ENCODE measurements at regions of chr15 and their contacts with region 1.

Region 1: DNA sequence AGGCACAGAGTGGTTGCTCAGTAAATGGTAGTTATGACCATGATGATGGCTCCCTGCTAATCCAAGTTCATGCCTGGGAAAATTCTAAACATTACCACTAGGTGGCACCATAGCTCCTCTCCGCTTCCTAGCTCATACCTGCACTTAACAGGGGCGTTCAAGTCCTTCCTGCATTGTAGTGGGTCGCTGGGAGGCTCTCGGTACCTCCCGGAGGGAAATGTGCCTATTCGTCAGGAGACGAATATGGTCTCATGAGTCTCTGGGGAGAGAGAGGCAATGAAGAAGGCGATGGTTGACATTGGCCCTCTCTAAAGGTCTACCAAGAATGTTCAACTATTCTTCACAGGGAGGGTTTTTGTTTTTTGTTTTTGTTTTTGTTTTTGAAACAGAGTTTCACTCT is 10.9 kb downstream of the MESP1 start:
- DNase-seq: peak; percentile 79
- ATAC-seq: peak; percentile 90
- H3K4me3 Mint-ChIP-seq: no peak overlapping the region
- H3K27ac Mint-ChIP-seq: no peak overlapping the region
- H3K4me1 Mint-ChIP-seq: peaks cover 2% of the 10 kb centered on the region
- H3K27me3 Mint-ChIP-seq: peaks cover 4% of the 10 kb centered on the region

Region 2: GRCh38 chr15:89640245-89640644 is 99.9 kb before region 1 on chr15:
- CTCF ChIA-PET with region 1: no interaction called
- POLR2A ChIA-PET with region 1: no interaction called
- DNase-seq: no peak
- ATAC-seq: no peak
- H3K4me3 Mint-ChIP-seq: no peak overlapping the region
- H3K27ac Mint-ChIP-seq: no peak overlapping the region
- H3K4me1 Mint-ChIP-seq: peaks cover 2% of the 10 kb centered on the region
- H3K27me3 Mint-ChIP-seq: no peaks in the 10 kb centered on the region

Region 3: GRCh38 chr15:89728254-89728653 is 11.9 kb before region 1 on chr15:
- CTCF ChIA-PET with region 1: interaction called, 14 read pairs
- POLR2A ChIA-PET with region 1: no interaction called
- DNase-seq: no peak
- ATAC-seq: no peak
- H3K4me3 Mint-ChIP-seq: no peak overlapping the region
- H3K27ac Mint-ChIP-seq: no peak overlapping the region
- H3K4me1 Mint-ChIP-seq: no peaks in the 10 kb centered on the region
- H3K27me3 Mint-ChIP-seq: peaks cover 6% of the 10 kb centered on the region

Region 4: GRCh38 chr15:89750560-89751542 is 10.7 kb after region 1 on chr15 and contains the start of gene MESP1:
- CTCF ChIA-PET with region 1: interaction called, 23 read pairs
- POLR2A ChIA-PET with region 1: no interaction called
- DNase-seq: peak; percentile 90
- ATAC-seq: peak; percentile 96
- H3K4me3 Mint-ChIP-seq: peak within 1 kb of the TSS; percentile 69
- H3K27ac Mint-ChIP-seq: peak within 1 kb of the TSS; percentile 64
- H3K4me1 Mint-ChIP-seq: no peaks in the 10 kb centered on the region
- H3K27me3 Mint-ChIP-seq: peaks cover 24% of the 10 kb centered on the region
- total RNA-seq, gene MESP1: 1.8 to 2.4 TPM

Region 5: DNA sequence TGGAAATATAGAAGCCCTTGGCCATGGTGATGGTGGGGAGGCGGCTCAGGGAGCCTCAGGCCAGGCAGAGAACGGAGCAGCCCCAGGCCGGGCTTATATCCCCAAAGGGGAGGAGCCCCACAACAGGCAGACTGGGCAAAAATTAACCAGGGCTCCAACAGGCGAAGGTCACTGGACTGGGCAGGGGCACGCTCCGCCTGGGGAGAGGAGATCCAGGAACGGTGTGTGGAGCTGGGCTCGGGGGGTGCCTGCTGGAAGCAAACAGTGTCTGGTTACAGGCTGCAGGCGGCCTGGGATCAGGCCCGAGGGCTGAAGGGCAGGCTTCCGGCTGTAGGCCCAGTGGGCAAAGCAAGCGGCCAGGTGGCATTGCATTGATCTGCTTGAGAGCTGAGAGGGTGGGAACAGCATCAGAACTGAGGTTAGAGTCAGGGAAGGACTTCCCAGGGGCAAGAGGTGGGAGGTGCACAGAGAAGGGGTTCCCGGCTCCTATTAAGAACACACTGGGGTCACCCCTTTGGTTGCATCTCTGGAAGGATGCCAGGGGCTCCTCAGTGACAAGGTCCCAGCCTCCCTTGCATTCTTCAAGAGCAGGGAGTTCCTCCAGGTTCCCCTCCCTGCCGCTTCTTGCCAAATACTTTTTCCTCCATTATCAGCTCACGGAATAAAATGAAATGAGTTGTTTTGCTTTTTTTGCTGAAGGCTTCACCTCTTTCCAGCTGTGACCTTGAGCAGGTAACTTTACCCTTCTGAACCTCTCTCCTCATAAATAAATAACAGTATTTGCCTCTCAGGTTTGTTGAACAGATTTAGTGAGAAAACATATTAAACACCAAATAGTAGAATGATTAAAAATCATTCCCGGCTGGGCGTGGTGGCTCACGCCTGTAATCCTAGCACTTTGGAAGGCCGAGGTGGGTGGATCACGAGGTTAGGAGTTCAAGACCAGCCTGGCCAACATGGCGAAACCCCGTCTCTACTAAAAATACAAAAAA is 66.7 kb after region 1 on chr15:
- CTCF ChIA-PET with region 1: no interaction called
- POLR2A ChIA-PET with region 1: no interaction called
- DNase-seq: no peak
- ATAC-seq: no peak
- H3K4me3 Mint-ChIP-seq: no peak overlapping the region
- H3K27ac Mint-ChIP-seq: no peak overlapping the region
- H3K4me1 Mint-ChIP-seq: no peaks in the 10 kb centered on the region
- H3K27me3 Mint-ChIP-seq: no peaks in the 10 kb centered on the region

Region 6: GRCh38 chr15:89835176-89835564 is 95.0 kb after region 1 on chr15:
- CTCF ChIA-PET with region 1: no interaction called
- POLR2A ChIA-PET with region 1: no interaction called
- DNase-seq: no peak
- ATAC-seq: no peak
- H3K4me3 Mint-ChIP-seq: no peak overlapping the region
- H3K27ac Mint-ChIP-seq: peak overlapping the region; percentile 1
- H3K4me1 Mint-ChIP-seq: peaks cover 16% of the 10 kb centered on the region
- H3K27me3 Mint-ChIP-seq: no peaks in the 10 kb centered on the region

Region 7: DNA sequence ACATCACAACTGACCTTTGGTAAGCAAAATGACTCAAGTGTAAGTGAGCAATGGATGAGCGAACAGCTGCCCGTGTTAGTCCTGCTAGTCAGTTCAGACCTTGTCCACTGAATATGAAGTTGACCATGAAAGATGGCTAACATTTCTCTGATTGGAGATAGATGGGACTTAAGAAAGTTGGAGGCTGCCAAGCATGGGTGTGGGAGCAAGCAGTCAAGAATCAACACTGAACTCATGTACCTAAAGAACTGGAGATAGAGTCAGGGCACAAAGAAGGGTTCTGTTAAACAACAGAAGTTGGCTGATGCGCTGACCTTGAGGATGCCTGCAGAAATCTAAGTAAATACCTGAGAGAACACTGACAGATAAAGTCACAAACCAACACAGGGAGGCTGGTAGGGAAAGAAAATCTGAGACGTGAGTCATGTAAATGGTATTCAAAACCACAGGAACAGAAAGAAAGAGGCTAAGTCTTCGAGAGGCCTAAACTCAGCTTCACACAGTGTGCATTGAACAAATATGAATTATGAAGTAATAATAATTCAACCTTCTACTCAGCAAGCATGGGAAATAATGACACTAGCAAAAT is 105.3 kb after region 1 on chr15:
- CTCF ChIA-PET with region 1: no interaction called
- POLR2A ChIA-PET with region 1: no interaction called
- DNase-seq: no peak
- ATAC-seq: no peak
- H3K4me3 Mint-ChIP-seq: no peak overlapping the region
- H3K27ac Mint-ChIP-seq: no peak overlapping the region
- H3K4me1 Mint-ChIP-seq: no peaks in the 10 kb centered on the region
- H3K27me3 Mint-ChIP-seq: no peaks in the 10 kb centered on the region

Region 8: GRCh38 chr15:89888214-89888804 is 148.2 kb after region 1 on chr15:
- CTCF ChIA-PET with region 1: interaction called, 19 read pairs
- POLR2A ChIA-PET with region 1: no interaction called
- DNase-seq: no peak
- ATAC-seq: no peak
- H3K4me3 Mint-ChIP-seq: no peak overlapping the region
- H3K27ac Mint-ChIP-seq: no peak overlapping the region
- H3K4me1 Mint-ChIP-seq: peaks cover 21% of the 10 kb centered on the region
- H3K27me3 Mint-ChIP-seq: no peaks in the 10 kb centered on the region